CD4-positive, alpha-beta T cell (primary cell): ENCODE measurements at regions of chr3 and their contacts with region 1.

Region 1: DNA sequence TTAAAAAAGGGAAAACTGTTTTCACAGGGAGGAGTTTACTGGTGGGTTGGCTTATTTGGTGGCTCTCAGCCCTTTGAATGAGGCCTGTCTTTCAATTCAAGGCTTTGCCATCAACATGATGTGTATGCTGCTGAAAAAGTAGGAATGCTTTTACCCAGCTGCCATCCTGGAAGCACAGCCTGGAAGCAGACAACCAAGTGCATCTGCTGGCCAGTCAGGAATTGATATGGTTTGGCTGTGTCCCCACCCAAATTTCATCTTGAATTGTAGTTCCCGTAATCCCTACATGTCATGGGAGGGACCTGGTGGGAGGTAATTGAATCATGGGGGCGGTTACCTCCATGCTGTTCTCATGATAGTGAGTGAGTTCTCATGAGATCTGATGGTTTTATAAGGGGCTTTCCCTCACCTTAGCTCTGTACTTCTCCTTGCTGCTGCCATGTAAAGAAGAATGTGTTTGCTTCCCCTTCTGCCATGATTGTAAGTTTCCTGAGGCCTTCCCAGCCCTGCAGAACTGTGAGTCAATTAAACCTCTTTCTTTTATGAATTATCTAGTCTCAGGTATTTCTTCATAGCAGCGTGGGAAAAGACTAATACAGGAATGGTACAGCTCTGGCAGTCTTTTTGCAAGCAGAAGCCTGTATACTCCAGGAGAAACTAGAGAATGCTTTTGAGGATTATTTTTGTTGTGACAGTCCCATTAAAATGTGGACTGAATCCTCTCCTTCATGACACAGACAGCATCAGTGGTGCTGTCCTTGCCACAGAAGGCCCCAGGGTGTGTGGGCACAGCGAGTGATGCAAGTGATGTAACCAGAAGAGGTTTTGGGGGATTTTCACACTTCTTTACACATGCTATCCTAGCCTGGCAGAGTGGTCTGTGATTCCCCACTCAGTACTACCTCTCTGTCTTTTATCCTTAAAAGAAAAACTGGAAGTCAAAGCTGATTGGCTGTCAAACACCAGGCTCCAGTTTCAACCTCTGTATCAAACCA is 20.0 kb downstream of the PLCL2 start:
- DNase-seq: peak in 2 of 14 experiments; percentile 66 to 76
- ATAC-seq: peak; percentile 26
- H3K4me3 ChIP-seq: no peak overlapping the region
- H3K4me3 Mint-ChIP-seq: peak overlapping the region; percentile 47
- H3K27ac ChIP-seq: no peak overlapping the region
- H3K27ac Mint-ChIP-seq: peak overlapping the region; percentile 91
- H3K4me1 ChIP-seq: peaks cover 64% of the 10 kb centered on the region
- H3K4me1 Mint-ChIP-seq: peaks cover 94% of the 10 kb centered on the region
- H3K27me3 ChIP-seq: no peaks in the 10 kb centered on the region
- H3K27me3 Mint-ChIP-seq: no peaks in the 10 kb centered on the region
- CTCF ChIP-seq: no peak

Region 2: GRCh38 chr3:16890597-16891333 is 14.0 kb before region 1 on chr3:
- CTCF ChIA-PET with region 1: interaction called, 4 read pairs
- POLR2A ChIA-PET with region 1: interaction called, 31 read pairs
- intact Hi-C with region 1: loop called (anchors 2 kb)
- DNase-seq: no peak
- ATAC-seq: no peak
- H3K4me3 ChIP-seq: no peak overlapping the region
- H3K4me3 Mint-ChIP-seq: peak overlapping the region; percentile 99
- H3K27ac ChIP-seq: no peak overlapping the region
- H3K27ac Mint-ChIP-seq: peak overlapping the region; percentile 98
- H3K4me1 ChIP-seq: peaks cover 35% of the 10 kb centered on the region
- H3K4me1 Mint-ChIP-seq: peaks cover 88% of the 10 kb centered on the region
- H3K27me3 ChIP-seq: no peaks in the 10 kb centered on the region
- H3K27me3 Mint-ChIP-seq: no peaks in the 10 kb centered on the region
- CTCF ChIP-seq: no peak

Region 3: DNA sequence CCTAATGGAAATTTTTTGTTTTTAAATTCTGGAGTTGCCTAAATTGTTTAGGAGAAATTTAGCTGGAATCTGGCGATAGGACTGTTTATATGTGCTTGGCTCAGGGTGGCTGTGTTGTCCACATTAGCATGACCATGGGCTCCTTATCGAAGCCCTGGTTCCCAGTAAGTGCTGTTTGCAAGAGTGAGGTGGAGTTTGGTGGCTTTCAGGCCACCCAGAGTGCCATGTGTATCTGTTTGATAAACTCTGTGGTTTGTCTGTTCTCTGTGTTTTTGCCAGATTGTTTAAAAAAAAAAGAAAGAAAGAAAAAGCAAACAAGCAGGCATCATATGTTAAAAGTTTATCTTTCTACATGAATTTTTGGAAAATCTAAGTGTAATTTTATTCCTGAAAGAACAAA is 31.5 kb after region 1 on chr3:
- CTCF ChIA-PET with region 1: no interaction called
- POLR2A ChIA-PET with region 1: no interaction called
- intact Hi-C with region 1: loop called (anchors 5 kb)
- DNase-seq: peak in 5 of 14 experiments; percentile 9 to 51 (median 37)
- ATAC-seq: peak; percentile 84
- H3K4me3 ChIP-seq: no peak overlapping the region
- H3K4me3 Mint-ChIP-seq: peak overlapping the region; percentile 85
- H3K27ac ChIP-seq: no peak overlapping the region
- H3K27ac Mint-ChIP-seq: peak overlapping the region; percentile 60
- H3K4me1 ChIP-seq: peaks cover 46% of the 10 kb centered on the region
- H3K4me1 Mint-ChIP-seq: peaks cover 97% of the 10 kb centered on the region
- H3K27me3 ChIP-seq: no peaks in the 10 kb centered on the region
- H3K27me3 Mint-ChIP-seq: no peaks in the 10 kb centered on the region
- CTCF ChIP-seq: no peak

Region 4: DNA sequence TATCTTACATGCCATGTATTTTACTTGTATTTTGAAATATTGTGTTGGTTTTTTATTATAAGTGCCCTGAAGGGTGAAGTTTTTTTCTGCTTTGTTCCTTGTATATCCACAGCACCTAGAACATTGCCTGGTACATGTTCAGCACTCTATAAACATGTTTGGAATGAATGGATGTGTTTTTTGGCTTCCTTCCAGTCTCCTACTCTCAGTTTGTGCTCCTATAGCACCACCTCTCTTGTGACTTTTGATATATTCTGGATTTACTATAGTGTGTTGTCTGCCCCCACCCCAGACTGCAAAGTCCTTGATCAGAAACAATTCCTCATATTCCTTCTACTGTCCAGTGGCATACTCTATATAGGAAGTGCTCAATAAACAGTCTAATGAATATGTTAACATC is 40.6 kb after region 1 on chr3:
- CTCF ChIA-PET with region 1: no interaction called
- POLR2A ChIA-PET with region 1: no interaction called
- intact Hi-C with region 1: loop called in 1 of 2 experiments (anchors 5 kb)
- DNase-seq: no peak
- ATAC-seq: no peak
- H3K4me3 ChIP-seq: no peak overlapping the region
- H3K4me3 Mint-ChIP-seq: no peak overlapping the region
- H3K27ac ChIP-seq: no peak overlapping the region
- H3K27ac Mint-ChIP-seq: no peak overlapping the region
- H3K4me1 ChIP-seq: peaks cover 21% of the 10 kb centered on the region
- H3K4me1 Mint-ChIP-seq: peaks cover 77% of the 10 kb centered on the region
- H3K27me3 ChIP-seq: no peaks in the 10 kb centered on the region
- H3K27me3 Mint-ChIP-seq: no peaks in the 10 kb centered on the region
- CTCF ChIP-seq: no peak